Activated naive CD4-positive, alpha-beta T cell treated with anti-CD3 and anti-CD28 coated beads, Interleukin-2, amount 10 ng/mL, durations not matched to agents 7 days and 5 days (primary cell): ENCODE measurements at regions of chr15 and their contacts with region 1.

Region 1: DNA sequence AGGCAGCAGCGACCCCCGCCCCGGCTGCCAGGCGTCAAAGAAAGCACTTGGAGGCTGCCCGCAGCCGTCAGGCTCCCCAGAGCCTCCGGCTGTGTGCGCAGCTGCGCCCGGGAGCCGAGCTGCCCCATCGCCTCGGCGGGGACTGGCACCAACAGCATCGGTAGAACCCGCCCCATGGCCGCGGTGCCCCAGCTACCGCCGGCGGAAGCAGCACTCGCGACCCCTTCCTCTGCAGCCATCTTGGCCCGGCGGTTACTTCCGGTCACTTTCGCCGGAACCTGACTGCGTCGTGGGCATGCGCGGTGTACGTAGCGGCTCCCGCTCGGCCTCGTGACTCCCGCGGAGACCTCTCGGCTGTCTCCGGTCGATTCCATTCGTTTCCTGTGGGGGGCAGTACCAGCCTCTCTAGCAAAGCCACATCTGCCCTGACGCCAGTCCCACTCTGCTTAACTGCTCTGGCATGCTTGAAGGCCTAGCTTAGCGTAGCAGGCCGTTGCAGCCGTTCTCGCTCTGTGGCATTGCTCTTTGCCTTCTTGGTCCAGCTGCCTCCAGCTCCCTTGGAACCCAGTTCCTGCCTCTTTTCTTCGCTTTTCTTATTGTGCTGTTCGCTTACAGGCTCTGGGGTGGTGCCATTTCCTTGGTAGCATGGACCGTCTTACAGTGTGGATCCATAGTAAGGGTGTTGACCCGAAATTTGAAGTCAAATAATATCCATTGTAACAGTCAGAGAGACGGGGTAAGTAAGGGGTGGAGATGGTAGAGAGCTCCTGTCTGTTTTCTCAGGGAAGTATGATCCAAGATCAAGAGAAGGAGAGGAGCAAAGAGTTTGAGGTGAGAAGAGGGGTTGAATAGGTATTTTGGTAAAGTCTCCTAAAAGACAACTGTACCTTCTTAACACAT is at the start of gene SPG11:
- DNase-seq: peak; percentile 98
- H3K4me3 Mint-ChIP-seq: peak within 1 kb of the TSS; percentile 98
- H3K27ac Mint-ChIP-seq: peak within 1 kb of the TSS; percentile 100
- H3K4me1 Mint-ChIP-seq: peaks cover 58% of the 10 kb centered on the region
- H3K27me3 Mint-ChIP-seq: no peaks in the 10 kb centered on the region

Region 2: DNA sequence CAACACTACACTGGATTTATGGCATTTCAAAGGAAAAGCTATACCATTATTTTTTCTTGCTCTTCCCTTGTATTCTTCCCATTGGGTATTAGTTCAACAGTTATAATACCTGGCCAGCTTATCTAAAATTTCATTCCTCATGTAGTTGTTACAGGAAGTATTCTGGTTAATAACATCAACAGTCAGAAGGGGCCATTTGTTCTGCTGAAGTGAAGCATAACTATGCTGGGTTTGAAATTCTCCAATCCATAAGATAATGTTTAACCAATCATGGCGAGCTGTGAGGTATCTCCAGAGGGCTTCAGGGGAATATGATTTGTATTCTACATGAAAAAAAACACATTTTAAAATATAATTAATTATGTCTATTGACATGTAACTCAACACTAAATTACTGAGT is 43.6 kb before region 1 on chr15:
- CTCF ChIA-PET with region 1: no interaction called
- DNase-seq: no peak
- H3K4me3 Mint-ChIP-seq: no peak overlapping the region
- H3K27ac Mint-ChIP-seq: no peak overlapping the region
- H3K4me1 Mint-ChIP-seq: no peaks in the 10 kb centered on the region
- H3K27me3 Mint-ChIP-seq: no peaks in the 10 kb centered on the region

Region 3: DNA sequence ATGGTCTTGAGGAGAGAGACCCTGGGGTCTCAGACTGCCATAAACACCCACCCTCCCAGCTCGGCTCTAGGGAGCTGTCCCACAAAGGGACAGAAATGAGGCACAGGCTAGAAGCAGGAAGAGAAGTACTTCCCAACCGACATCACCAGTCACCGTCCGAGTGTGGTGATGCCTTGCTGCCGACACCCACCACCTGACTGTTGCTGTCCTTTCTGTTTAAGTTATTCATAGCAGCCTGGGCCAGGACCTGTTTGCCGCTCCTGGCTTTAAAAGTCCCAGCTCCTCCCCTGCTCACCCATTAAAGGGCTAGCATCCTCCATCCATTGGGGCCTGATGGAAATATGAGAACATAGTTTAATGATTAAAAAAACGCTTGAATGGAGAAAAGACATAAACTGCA is 13.0 kb after region 1 on chr15:
- CTCF ChIA-PET with region 1: interaction called, 42 read pairs
- DNase-seq: peak; percentile 56
- H3K4me3 Mint-ChIP-seq: peak overlapping the region; percentile 60
- H3K27ac Mint-ChIP-seq: peak overlapping the region; percentile 98
- H3K4me1 Mint-ChIP-seq: peaks cover 88% of the 10 kb centered on the region
- H3K27me3 Mint-ChIP-seq: no peaks in the 10 kb centered on the region

Region 4: DNA sequence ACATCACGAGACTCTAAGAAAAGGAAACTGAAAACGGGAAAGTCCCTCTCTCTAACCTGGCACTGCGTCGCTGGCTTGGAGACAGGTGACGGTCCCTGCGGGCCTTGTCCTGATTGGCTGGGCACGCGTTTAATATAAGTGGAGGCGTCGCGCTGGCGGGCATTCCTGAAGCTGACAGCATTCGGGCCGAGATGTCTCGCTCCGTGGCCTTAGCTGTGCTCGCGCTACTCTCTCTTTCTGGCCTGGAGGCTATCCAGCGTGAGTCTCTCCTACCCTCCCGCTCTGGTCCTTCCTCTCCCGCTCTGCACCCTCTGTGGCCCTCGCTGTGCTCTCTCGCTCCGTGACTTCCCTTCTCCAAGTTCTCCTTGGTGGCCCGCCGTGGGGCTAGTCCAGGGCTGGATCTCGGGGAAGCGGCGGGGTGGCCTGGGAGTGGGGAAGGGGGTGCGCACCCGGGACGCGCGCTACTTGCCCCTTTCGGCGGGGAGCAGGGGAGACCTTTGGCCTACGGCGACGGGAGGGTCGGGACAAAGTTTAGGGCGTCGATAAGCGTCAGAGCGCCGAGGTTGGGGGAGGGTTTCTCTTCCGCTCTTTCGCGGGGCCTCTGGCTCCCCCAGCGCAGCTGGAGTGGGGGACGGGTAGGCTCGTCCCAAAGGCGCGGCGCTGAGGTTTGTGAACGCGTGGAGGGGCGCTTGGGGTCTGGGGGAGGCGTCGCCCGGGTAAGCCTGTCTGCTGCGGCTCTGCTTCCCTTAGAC is 47.9 kb after region 1 on chr15 and contains the start of gene B2M:
- CTCF ChIA-PET with region 1: interaction called, 168 read pairs
- DNase-seq: peak; percentile 95
- H3K4me3 Mint-ChIP-seq: peak within 1 kb of the TSS; percentile 99
- H3K27ac Mint-ChIP-seq: peak within 1 kb of the TSS; percentile 100
- H3K4me1 Mint-ChIP-seq: peaks cover 47% of the 10 kb centered on the region
- H3K27me3 Mint-ChIP-seq: peaks cover 18% of the 10 kb centered on the region

Region 5: DNA sequence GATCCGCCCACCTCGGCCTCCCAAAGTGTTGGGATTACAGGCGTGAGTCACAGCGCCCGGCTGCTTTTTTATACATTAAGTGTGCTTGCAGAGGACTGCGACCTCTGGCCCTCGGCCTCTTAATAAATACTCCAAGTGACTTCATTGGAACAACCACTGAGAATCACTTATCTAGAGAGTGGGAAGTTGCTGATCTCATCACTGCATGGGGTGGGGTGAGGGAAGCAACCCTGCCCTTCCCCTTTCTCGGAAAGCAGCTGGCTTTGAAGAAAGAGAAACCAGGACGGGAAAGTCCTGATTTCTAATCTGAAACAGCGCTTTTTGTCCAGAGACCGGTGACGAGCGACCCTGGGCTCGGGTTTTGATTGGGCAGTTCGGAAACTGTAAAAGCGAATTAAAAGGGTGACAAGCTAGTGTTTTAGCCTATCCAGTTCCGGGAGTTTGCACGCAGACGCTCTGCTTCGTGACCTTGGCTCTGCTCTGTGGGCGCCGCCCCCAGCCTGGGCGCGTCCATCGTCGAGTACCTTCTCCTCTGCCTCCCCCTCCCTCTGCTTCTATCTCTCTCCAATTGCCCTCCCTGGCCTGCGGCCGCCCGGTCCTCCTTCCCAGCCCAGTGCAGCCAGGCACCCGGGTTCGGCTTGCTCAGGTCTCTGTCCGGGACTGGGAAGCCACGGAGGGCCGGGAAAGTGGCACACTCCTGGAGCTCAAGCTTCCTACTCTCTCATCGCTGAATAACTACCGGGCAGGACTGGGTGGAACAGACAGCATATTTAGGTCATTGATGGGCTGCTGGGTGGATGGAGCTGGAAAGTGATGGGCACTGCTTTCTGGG is 65.1 kb after region 1 on chr15:
- CTCF ChIA-PET with region 1: interaction called, 165 read pairs
- DNase-seq: peak; percentile 96
- H3K4me3 Mint-ChIP-seq: peak overlapping the region; percentile 99
- H3K27ac Mint-ChIP-seq: peak overlapping the region; percentile 99
- H3K4me1 Mint-ChIP-seq: peaks cover 81% of the 10 kb centered on the region
- H3K27me3 Mint-ChIP-seq: no peaks in the 10 kb centered on the region

Region 6: GRCh38 chr15:44753345-44753744 is 89.7 kb after region 1 on chr15:
- CTCF ChIA-PET with region 1: no interaction called
- DNase-seq: no peak
- H3K4me3 Mint-ChIP-seq: no peak overlapping the region
- H3K27ac Mint-ChIP-seq: no peak overlapping the region
- H3K4me1 Mint-ChIP-seq: peaks cover 8% of the 10 kb centered on the region
- H3K27me3 Mint-ChIP-seq: peaks cover 5% of the 10 kb centered on the region

Region 7: GRCh38 chr15:45091161-45091560 is 427.5 kb after region 1 on chr15:
- CTCF ChIA-PET with region 1: no interaction called
- DNase-seq: no peak
- H3K4me3 Mint-ChIP-seq: no peak overlapping the region
- H3K27ac Mint-ChIP-seq: no peak overlapping the region
- H3K4me1 Mint-ChIP-seq: no peaks in the 10 kb centered on the region
- H3K27me3 Mint-ChIP-seq: peaks cover 33% of the 10 kb centered on the region